Left lung (tissue), 14 donors: ENCODE measurements at regions of chr1 and their contacts with region 1.

Region 1: GRCh38 chr1:66271216-66271903 is 262.6 kb upstream of the SGIP1 start:
- DNase-seq: peak in 3 of 4 donors; percentile 75 to 95 (median 91)
- ATAC-seq: peak; percentile 89
- H3K4me3 ChIP-seq: no peak overlapping the region
- H3K27ac ChIP-seq: peak overlapping the region; percentile 77 to 79
- H3K4me1 ChIP-seq: peaks cover 31 to 76% of the 10 kb centered on the region in 2 donors
- H3K27me3 ChIP-seq: no peaks in the 10 kb centered on the region
- CTCF ChIP-seq: no peak

Region 2: DNA sequence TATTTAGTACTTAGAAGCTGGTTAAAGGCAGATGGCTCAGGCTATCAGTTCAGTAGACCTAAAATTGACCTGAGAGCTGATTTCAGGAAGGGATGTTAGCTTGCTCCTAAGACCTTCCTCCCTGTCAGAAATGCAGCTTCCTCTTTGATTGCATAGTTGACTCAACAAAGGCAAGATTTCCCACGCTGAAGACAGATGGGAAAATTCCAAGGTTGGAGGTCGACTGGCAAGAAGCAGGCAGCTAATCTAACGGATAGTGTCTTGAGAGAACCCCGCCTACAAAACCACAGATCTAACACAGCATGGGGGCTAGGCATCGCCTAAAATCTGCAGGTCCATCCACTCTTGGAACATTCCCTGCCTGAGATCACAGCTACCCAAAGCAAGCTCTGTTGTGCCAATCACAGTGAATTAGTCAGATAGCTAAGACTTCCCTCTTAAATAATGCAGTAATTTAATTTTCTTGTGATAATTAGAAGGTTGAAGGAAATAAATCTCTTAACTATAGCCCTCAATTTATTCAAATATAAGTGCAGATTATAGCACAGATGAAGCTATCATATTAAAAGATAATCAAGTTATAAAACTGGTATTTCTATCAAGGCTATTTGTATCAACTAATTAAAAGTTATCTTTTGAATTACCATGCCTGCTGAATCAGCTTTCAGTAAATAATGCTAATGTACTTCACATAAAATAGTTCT is 95.2 kb before region 1 on chr1:
- intact Hi-C with region 1: no loop called
- DNase-seq: no peak
- ATAC-seq: no peak
- H3K4me3 ChIP-seq: no peak overlapping the region
- H3K27ac ChIP-seq: no peak overlapping the region
- H3K4me1 ChIP-seq: no peaks in the 10 kb centered on the region
- H3K27me3 ChIP-seq: no peaks in the 10 kb centered on the region
- CTCF ChIP-seq: no peak

Region 3: DNA sequence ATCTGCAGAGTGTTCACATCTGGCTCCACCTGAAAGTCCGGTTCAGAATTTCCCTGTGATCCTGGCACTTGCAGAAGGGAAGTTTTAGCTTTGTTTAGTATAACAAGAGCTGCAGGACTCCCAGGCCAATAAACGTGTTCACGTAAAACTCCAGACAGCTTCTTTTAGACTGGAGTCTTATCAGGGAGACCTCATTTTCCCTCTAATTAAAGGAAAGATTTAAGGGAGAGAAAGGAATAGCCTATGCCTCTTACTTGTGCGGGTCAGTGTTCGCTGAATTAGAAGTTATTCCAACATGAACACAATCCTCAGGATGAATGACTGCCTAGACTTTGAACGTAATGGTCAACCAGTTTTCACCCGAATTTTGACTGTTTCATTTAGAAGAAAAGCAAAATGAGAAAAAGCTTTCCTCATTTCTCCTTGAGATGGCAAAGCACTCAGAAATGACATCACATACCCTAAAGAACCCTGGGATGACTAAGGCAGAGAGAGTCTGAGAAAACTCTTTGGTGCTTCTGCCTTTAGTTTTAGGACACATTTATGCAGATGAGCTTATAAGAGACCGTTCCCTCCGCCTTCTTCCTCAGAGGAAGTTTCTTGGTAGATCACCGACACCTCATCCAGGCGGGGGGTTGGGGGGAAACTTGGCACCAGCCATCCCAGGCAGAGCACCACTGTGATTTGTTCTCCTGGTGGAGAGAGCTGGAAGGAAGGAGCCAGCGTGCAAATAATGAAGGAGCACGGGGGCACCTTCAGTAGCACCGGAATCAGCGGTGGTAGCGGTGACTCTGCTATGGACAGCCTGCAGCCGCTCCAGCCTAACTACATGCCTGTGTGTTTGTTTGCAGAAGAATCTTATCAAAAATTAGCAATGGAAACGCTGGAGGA is 60.5 kb after region 1 on chr1:
- intact Hi-C with region 1: loop called in 1 of 2 experiments (anchors 5 kb)
- DNase-seq: peak; percentile 67 to 78 (median 73)
- ATAC-seq: peak; percentile 72
- H3K4me3 ChIP-seq: peak overlapping the region; percentile 54 to 58
- H3K27ac ChIP-seq: peak overlapping the region; percentile 88 to 92
- H3K4me1 ChIP-seq: peaks cover 24 to 82% of the 10 kb centered on the region in 2 donors
- H3K27me3 ChIP-seq: no peaks in the 10 kb centered on the region
- CTCF ChIP-seq: peak in 1 of 2 donors; percentile 12